Left ventricle myocardium superior (tissue), 1 donor: ENCODE measurements at regions of chr15 and their contacts with region 1.

Region 1: DNA sequence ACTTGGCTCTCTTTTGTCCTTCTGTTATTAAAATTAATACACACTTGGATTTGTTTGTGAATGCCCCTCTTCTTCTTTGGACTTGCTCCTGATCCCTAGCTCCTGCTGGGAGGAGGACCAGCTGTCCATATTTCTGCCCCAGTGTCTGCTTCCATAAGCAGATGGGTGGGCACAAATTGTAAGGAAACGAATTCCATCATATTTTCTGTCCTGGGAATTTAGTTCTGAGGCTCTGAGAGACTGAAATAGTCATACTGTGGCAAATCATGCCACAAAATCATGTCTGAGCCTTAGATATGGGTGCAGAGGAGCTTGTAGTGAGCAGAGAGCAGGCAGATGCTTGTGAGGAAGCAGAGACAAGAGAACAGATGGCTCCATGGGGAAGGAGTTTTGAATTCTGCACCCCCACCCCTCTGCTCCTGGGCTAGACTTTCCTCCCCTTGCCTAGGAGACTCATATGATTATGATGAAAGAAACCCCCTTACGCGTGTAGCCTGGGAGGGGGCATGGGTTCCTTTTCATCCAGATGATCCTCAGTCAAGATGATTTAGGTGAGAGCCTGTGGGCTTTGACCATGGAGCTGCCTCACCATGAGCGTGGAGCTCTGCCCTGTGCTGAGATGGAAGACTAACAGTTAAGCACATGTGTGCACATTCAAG is 50.6 kb downstream of the SV2B start:
- DNase-seq: no peak
- ATAC-seq: no peak

Region 2: GRCh38 chr15:91208371-91208770 is 57.7 kb after region 1 on chr15:
- intact Hi-C with region 1: loop called (anchors 5 kb)
- DNase-seq: no peak
- ATAC-seq: no peak

Region 3: DNA sequence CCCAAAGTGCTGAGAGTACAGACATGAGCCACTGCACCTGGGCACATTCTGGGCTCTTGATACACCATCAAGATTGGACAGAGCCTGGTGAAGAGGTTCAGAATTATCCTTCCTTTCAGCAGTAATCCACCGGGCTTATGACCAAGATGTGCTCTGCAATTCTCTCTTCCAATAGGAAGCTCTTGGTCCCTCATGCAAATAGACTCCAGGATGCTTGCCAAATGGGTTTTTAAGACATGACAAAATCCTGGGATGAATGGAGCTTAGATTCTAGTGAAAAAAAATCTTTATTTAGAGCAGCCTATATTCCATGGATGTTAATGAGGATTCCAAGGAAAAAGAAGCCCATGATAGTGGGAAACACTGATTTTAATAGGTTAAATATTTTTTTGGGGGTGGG is 68.6 kb after region 1 on chr15:
- intact Hi-C with region 1: no loop called
- DNase-seq: no peak
- ATAC-seq: no peak

Region 4: DNA sequence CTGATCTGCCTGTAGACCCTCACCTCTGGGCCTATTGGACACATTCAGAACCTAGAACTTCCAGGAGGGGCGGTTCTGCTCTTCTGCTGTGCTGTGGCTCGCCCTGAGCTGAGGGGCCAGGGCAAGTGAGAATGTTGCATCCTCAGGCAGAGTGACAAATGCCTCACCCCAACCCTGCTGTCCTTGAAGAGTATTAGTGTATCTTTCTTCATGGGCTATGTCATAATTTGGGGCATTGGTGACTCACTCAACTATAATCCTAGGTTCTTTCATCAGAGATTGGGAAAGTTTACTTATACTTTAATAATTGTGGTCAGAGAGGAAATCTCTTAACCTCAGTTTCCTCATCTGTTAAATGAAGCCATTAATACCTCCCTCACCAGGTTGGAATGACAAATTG is 93.2 kb after region 1 on chr15:
- intact Hi-C with region 1: no loop called
- DNase-seq: no peak
- ATAC-seq: no peak